Natural killer cell (primary cell): ENCODE measurements at regions of chr6 and their contacts with region 1.

Region 1: DNA sequence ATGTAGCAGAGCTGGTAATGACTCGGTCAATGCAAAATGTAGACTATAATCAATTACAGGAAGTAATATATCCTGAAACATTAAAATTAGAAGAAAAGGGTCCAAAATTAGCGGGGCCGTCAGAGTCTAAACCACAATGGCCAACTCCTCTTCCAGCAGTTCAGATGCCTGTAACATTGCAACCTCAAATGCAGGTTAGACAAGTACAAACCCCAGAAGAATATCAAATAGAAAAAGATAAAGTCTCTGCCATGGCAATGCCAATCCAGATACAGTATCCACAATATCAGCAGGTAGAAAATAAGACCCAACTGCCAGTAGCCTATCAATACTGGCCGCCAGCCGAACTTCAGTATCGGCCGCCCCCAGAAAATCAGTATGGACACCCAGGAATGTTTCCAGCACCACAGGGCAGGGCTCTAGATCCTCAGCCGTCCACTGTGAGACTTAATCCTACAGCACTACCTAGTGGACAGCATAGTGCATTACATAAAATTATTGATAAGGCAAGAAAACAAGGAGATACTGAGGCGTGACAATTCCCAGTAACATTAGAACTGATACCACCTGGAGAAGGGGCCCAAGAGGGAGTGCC is 158.4 kb downstream of the GPX5 start:
- DNase-seq: peak in 1 of 2 donors; percentile 63
- ATAC-seq: peak; percentile 54 to 72 (median 60)
- H3K4me3 ChIP-seq: no peak overlapping the region
- H3K4me3 Mint-ChIP-seq: no peak overlapping the region
- H3K27ac ChIP-seq: no peak overlapping the region
- H3K27ac Mint-ChIP-seq: no peak overlapping the region
- H3K4me1 ChIP-seq: no peaks in the 10 kb centered on the region
- H3K4me1 Mint-ChIP-seq: no peaks in the 10 kb centered on the region
- H3K27me3 ChIP-seq: peaks cover 17% of the 10 kb centered on the region
- H3K27me3 Mint-ChIP-seq: peaks cover 52 to 90% of the 10 kb centered on the region in 2 donors
- CTCF ChIP-seq: peak; percentile 52

Region 2: GRCh38 chr6:28988536-28989311 is 304.7 kb after region 1 on chr6:
- intact Hi-C with region 1: loop called (anchors 1 kb)
- DNase-seq: peak; percentile 55 to 87
- ATAC-seq: peak; percentile 80 to 91 (median 88)
- H3K4me3 ChIP-seq: peak overlapping the region; percentile 5
- H3K4me3 Mint-ChIP-seq: peak overlapping the region; percentile 78
- H3K27ac ChIP-seq: no peak overlapping the region
- H3K27ac Mint-ChIP-seq: peak overlapping the region in 1 of 2 donors; percentile 16
- H3K4me1 ChIP-seq: peaks cover 13% of the 10 kb centered on the region
- H3K4me1 Mint-ChIP-seq: peaks cover 19 to 29% of the 10 kb centered on the region in 2 donors
- H3K27me3 ChIP-seq: peaks cover 15% of the 10 kb centered on the region
- H3K27me3 Mint-ChIP-seq: peaks cover 21 to 22% of the 10 kb centered on the region in 2 donors
- CTCF ChIP-seq: peak; percentile 26

Region 3: GRCh38 chr6:29016559-29017427 is 332.8 kb after region 1 on chr6:
- intact Hi-C with region 1: loop called (anchors 1 kb)
- DNase-seq: peak; percentile 73 to 92
- ATAC-seq: peak; percentile 84 to 87 (median 86)
- H3K4me3 ChIP-seq: peak overlapping the region; percentile 61
- H3K4me3 Mint-ChIP-seq: peak overlapping the region; percentile 92
- H3K27ac ChIP-seq: peak overlapping the region; percentile 29
- H3K27ac Mint-ChIP-seq: peak overlapping the region; percentile 22 to 81
- H3K4me1 ChIP-seq: peaks cover 15% of the 10 kb centered on the region
- H3K4me1 Mint-ChIP-seq: peaks cover 17 to 19% of the 10 kb centered on the region in 2 donors
- H3K27me3 ChIP-seq: peaks cover 37% of the 10 kb centered on the region
- H3K27me3 Mint-ChIP-seq: peaks cover 50 to 71% of the 10 kb centered on the region in 2 donors
- CTCF ChIP-seq: peak; percentile 89

Region 4: DNA sequence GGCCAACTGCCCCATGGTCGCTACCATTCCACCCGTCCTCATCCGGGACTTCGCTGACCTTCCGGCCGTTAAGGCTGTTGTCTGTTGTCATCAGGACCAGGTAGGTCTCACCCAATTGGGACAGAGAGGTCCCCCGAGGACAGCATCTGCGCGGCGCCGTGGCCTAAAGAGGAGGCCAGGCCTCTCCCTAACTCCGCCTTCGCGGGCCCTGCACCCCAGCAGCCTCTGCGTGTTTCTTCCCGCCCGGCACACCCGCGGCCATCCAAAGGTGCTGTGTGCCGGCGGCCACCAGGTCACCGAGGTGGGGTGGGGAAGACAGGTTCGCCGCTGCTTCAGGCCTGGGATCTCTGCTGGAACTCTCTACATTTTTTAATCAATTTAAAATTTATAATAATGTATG is 351.9 kb after region 1 on chr6:
- intact Hi-C with region 1: no loop called
- DNase-seq: no peak
- ATAC-seq: no peak
- H3K4me3 ChIP-seq: no peak overlapping the region
- H3K4me3 Mint-ChIP-seq: no peak overlapping the region
- H3K27ac ChIP-seq: no peak overlapping the region
- H3K27ac Mint-ChIP-seq: no peak overlapping the region
- H3K4me1 ChIP-seq: no peaks in the 10 kb centered on the region
- H3K4me1 Mint-ChIP-seq: no peaks in the 10 kb centered on the region
- H3K27me3 ChIP-seq: peaks cover 12% of the 10 kb centered on the region
- H3K27me3 Mint-ChIP-seq: peaks cover 12 to 41% of the 10 kb centered on the region in 2 donors
- CTCF ChIP-seq: no peak